HCT116 (cell line): ENCODE measurements at regions of chr17 and their contacts with region 1.

Region 1: GRCh38 chr17:61551255-61551742 is 39.7 kb downstream of the NACA2 start:
- DNase-seq: peak; percentile 59
- ATAC-seq: peak; percentile 91
- H3K4me3 ChIP-seq: no peak overlapping the region
- H3K27ac ChIP-seq: peak overlapping the region; percentile 63
- H3K4me1 ChIP-seq: peaks cover 27 to 30% of the 10 kb centered on the region in 2 experiments
- H3K27me3 ChIP-seq: no peaks in the 10 kb centered on the region
- CTCF ChIP-seq: peak; percentile 82 to 95 (median 94)
- POLR2A ChIP-seq: no peak
- RAD21 ChIP-seq: peak; percentile 97

Region 2: GRCh38 chr17:61400058-61400716 is 151.1 kb before region 1 on chr17:
- CTCF ChIA-PET with region 1: no interaction called
- POLR2A ChIA-PET with region 1: no interaction called
- RAD21 ChIA-PET with region 1: no interaction called
- intact Hi-C with region 1: no loop called
- DNase-seq: no peak
- ATAC-seq: no peak
- H3K4me3 ChIP-seq: no peak overlapping the region
- H3K27ac ChIP-seq: no peak overlapping the region
- H3K4me1 ChIP-seq: no peaks in the 10 kb centered on the region
- H3K27me3 ChIP-seq: no peaks in the 10 kb centered on the region
- CTCF ChIP-seq: no peak
- POLR2A ChIP-seq: no peak
- RAD21 ChIP-seq: no peak

Region 3: GRCh38 chr17:61426013-61426730 is 125.1 kb before region 1 on chr17:
- CTCF ChIA-PET with region 1: interaction called, 14 read pairs
- POLR2A ChIA-PET with region 1: no interaction called
- RAD21 ChIA-PET with region 1: no interaction called
- intact Hi-C with region 1: loop called (anchors 2 kb)
- DNase-seq: peak; percentile 63
- ATAC-seq: peak; percentile 72
- H3K4me3 ChIP-seq: no peak overlapping the region
- H3K27ac ChIP-seq: peak overlapping the region; percentile 89
- H3K4me1 ChIP-seq: peaks cover 37 to 42% of the 10 kb centered on the region in 2 experiments
- H3K27me3 ChIP-seq: no peaks in the 10 kb centered on the region
- CTCF ChIP-seq: peak; percentile 58 to 86 (median 64)
- POLR2A ChIP-seq: no peak
- RAD21 ChIP-seq: peak; percentile 92